Ascending aorta (tissue), 2 donors: ENCODE measurements at regions of chr4 and their contacts with region 1.

Region 1: DNA sequence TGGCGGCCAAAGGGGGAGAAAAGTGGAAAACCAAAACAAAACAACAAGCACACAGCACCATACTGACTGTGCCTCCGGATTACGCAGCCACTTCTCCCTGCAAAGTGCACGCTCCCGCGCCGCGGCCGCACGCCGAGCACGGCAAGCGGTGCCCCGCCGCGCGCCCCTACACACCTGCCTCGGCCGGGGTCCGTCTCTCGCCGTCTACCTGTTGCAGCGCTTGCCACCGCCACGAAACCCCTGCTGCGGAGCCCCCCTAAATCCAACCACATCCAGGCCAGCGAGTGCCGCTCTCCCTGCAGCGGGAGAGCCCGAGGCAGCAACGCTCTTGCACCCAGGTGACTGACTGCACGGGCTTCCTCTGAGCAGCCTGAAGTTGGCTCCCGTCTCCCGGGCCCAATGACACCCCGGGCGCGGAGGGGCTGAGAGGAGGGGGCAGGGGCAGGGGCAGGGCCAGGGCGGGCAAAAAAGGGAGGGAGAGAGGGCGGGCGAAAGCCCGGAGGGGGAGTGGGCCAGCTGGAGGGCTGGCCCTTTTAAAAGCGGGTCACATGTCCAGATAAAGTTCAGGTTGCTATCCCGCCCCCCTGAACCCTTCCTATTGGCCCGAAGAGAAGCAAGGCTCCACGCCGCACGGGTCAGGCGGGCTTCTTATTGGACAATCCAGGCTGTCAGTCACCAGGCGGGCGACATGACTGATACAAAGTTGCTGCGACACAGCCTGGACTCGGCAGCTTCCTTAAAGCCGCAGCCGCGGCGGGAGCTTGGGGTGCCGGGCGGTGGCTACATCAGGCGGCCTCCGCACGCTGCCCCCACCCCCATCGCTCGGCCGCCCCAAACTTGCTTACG is at the start of gene NR3C2:
- DNase-seq: peak; percentile 98 to 100
- H3K4me3 ChIP-seq: peak within 1 kb of the TSS; percentile 92 to 99
- H3K27ac ChIP-seq: peak within 1 kb of the TSS; percentile 95 to 96
- H3K4me1 ChIP-seq: peaks cover 0 to 14% of the 10 kb centered on the region in 2 donors
- H3K27me3 ChIP-seq: no peaks in the 10 kb centered on the region
- CTCF ChIP-seq: no peak
- total RNA-seq, gene NR3C2: 42.3 TPM

Region 2: GRCh38 chr4:147103403-147103946 is 1338.7 kb before region 1 on chr4:
- intact Hi-C with region 1: loop called (anchors 10 kb)
- DNase-seq: peak; percentile 73 to 95
- H3K4me3 ChIP-seq: no peak overlapping the region
- H3K27ac ChIP-seq: peak overlapping the region; percentile 72 to 78
- H3K4me1 ChIP-seq: peaks cover 0 to 14% of the 10 kb centered on the region in 2 donors
- H3K27me3 ChIP-seq: no peaks in the 10 kb centered on the region
- CTCF ChIP-seq: no peak

Region 3: DNA sequence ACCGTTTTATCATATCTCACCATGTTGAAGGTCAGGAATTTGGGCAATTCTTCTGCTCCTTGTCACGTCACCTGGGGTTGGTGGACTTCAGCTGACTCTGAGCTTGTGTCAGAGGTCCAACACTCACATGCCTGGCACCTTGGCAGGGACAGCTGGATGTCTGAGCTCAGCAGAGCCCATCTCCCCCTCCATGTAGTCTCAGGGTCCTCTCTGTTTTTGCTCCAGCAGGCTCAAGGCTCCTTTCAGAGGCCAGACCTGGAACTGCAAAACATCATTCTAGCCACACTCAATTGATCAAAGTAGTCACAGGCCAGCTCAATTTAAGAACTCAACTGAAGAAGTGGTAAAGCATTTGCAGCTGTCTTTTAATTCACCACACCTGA is 915.9 kb before region 1 on chr4:
- intact Hi-C with region 1: no loop called
- DNase-seq: no peak
- H3K4me3 ChIP-seq: no peak overlapping the region
- H3K27ac ChIP-seq: no peak overlapping the region
- H3K4me1 ChIP-seq: no peaks in the 10 kb centered on the region
- H3K27me3 ChIP-seq: no peaks in the 10 kb centered on the region
- CTCF ChIP-seq: no peak

Region 4: GRCh38 chr4:147916351-147916750 is 525.9 kb before region 1 on chr4:
- intact Hi-C with region 1: loop called (anchors 10 kb)
- DNase-seq: no peak
- H3K4me3 ChIP-seq: no peak overlapping the region
- H3K27ac ChIP-seq: peak overlapping the region; percentile 34 to 46
- H3K4me1 ChIP-seq: peaks cover 2 to 10% of the 10 kb centered on the region in 2 donors
- H3K27me3 ChIP-seq: no peaks in the 10 kb centered on the region
- CTCF ChIP-seq: no peak

Region 5: DNA sequence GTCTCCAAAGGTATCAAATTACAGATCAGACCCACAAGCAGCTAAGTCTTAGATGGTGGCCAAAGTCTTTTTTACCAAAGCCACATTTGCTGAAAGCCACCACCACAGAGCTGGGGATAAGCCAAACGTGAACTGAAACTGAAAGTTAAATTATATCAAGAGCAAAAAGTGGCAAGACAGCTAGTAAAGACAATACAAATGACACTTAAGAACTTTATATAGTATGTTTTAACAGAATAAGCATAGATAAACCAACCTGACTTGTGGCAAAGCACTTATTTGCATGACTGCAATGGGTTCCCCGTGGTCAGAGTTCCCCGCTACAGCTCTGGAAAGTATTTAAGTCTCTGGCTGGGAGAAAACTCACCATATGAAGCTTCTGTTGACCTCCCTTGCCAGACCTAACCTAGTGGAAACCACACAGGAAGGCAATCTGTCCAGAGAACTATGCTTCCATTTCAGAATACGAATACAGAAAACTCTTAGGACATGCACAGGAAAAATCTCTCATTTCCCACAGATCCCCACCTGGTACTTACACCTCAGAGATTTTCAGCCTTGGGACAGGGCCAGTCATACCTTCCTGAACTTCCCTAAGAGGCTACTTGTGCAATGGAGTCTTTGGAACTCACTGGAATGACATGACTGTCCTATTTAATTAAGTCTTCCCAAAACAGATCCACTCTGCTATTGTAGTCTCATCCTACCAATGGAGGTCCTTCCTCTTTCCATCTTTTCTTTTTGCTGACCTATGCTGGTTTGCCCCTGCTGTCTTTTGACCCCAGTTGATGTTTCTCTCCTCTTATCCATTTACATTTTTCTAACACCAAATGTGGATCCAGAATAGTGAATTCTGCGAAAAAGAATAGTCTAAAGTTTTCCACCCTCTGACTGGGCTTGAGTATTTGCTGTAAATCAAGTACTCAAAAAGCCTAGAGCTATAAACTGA is 225.1 kb before region 1 on chr4:
- intact Hi-C with region 1: loop called (anchors 5 kb)
- DNase-seq: no peak
- H3K4me3 ChIP-seq: peak overlapping the region in 1 of 2 donors; percentile 47
- H3K27ac ChIP-seq: peak overlapping the region; percentile 3 to 34
- H3K4me1 ChIP-seq: no peaks in the 10 kb centered on the region
- H3K27me3 ChIP-seq: no peaks in the 10 kb centered on the region
- CTCF ChIP-seq: no peak

Region 6: DNA sequence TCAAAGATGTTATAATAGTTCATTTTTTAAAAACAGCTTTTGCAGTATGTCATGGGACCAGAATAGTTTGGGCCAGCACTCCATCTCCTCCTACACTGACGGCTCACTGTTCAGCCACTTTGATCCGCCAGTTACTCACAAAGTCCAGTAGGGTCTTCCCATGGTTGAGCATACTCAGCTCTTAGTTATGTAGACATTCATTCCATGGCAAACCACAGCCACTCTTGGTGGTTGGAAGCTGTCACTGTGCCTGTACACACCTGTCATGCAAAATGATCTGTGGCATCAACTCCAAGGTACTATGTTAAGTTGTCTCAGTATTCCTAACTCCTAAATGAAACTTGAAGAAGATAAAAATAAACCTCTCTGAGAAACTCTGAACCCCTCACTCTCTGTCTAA is 127.2 kb before region 1 on chr4:
- intact Hi-C with region 1: no loop called
- DNase-seq: no peak
- H3K4me3 ChIP-seq: no peak overlapping the region
- H3K27ac ChIP-seq: no peak overlapping the region
- H3K4me1 ChIP-seq: peaks cover 0 to 3% of the 10 kb centered on the region in 2 donors
- H3K27me3 ChIP-seq: no peaks in the 10 kb centered on the region
- CTCF ChIP-seq: no peak

Region 7: GRCh38 chr4:148344941-148345340 is 97.3 kb before region 1 on chr4:
- intact Hi-C with region 1: no loop called
- DNase-seq: no peak
- H3K4me3 ChIP-seq: no peak overlapping the region
- H3K27ac ChIP-seq: no peak overlapping the region
- H3K4me1 ChIP-seq: no peaks in the 10 kb centered on the region
- H3K27me3 ChIP-seq: no peaks in the 10 kb centered on the region
- CTCF ChIP-seq: no peak

Region 8: DNA sequence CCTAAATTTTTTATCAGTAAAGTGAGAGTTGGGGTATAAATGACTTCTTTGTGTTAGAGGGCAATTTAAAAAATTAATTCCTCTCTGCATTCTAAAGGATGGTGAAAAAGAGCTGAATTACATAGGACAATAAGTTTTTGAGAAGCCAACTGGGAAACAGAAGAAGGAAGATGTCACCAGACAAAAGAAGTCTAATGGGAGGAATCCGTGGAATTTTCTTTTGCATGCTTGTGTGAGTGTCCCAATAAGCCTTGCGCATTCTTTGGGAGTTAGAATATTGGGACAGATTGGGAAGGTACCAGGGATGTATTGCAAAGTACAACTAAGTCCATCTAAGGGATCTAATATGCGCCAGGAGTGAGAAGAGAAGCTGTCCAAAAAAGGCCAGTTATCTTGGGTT is 35.1 kb after region 1 on chr4:
- intact Hi-C with region 1: no loop called
- DNase-seq: no peak
- H3K4me3 ChIP-seq: no peak overlapping the region
- H3K27ac ChIP-seq: no peak overlapping the region
- H3K4me1 ChIP-seq: no peaks in the 10 kb centered on the region
- H3K27me3 ChIP-seq: no peaks in the 10 kb centered on the region
- CTCF ChIP-seq: no peak

Region 9: GRCh38 chr4:150237110-150237857 is 1795.1 kb after region 1 on chr4:
- intact Hi-C with region 1: loop called (anchors 10 kb)
- DNase-seq: no peak
- H3K4me3 ChIP-seq: peak overlapping the region in 1 of 2 donors; percentile 4
- H3K27ac ChIP-seq: peak overlapping the region; percentile 75 to 82
- H3K4me1 ChIP-seq: peaks cover 0 to 21% of the 10 kb centered on the region in 2 donors
- H3K27me3 ChIP-seq: no peaks in the 10 kb centered on the region
- CTCF ChIP-seq: no peak